WTC11 (cell line): ENCODE measurements at regions of chr12 and their contacts with region 1.

Region 1: DNA sequence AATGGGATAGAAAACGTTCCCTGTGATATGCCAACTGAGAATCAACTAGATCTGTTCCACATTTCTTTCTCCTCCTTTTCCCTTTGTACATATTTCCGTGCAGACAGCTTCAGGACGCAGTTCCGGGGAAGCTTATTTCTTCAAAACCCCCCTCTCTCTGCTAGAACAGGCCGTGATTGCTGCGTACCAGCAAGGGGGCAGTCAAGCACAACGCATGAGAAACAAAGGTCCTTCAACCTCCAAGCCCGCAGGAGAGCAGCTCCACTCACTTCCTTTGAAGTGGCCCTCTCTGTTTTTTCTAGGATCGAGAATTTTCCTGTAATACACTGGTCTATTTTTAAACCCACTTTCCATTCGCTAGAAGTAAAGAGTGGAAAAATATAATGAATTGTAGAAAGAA is 80.8 kb downstream of the ZNF664 start:
- DNase-seq: peak; percentile 70
- ATAC-seq: peak; percentile 96
- H3K4me3 Mint-ChIP-seq: no peak overlapping the region
- H3K27ac Mint-ChIP-seq: no peak overlapping the region
- H3K4me1 Mint-ChIP-seq: peaks cover 24% of the 10 kb centered on the region
- H3K27me3 Mint-ChIP-seq: peaks cover 3% of the 10 kb centered on the region; the same call in 1 of the 2 replicates
- CTCF ChIP-seq: no peak

Region 2: GRCh38 chr12:123972457-123973401 is 81.1 kb before region 1 on chr12 and contains the starts of genes CCDC92 and ZNF664:
- CTCF ChIA-PET with region 1: no interaction called
- POLR2A ChIA-PET with region 1: no interaction called
- DNase-seq: peak; percentile 96
- ATAC-seq: peak; percentile 84
- H3K4me3 Mint-ChIP-seq: peak within 1 kb of the TSS; percentile 91
- H3K27ac Mint-ChIP-seq: peak within 1 kb of the TSS; percentile 44; the same call in 1 of the 2 replicates
- H3K4me1 Mint-ChIP-seq: peaks cover 23% of the 10 kb centered on the region
- H3K27me3 Mint-ChIP-seq: peaks cover 73% of the 10 kb centered on the region
- CTCF ChIP-seq: no peak
- total RNA-seq, gene CCDC92: 1.8 to 2.7 TPM (median 2.0 TPM) in 3 replicates
- total RNA-seq, gene ZNF664: 52.6 to 61.7 TPM (median 58.9 TPM) in 3 replicates

Region 3: GRCh38 chr12:124036674-124037109 is 17.2 kb before region 1 on chr12:
- CTCF ChIA-PET with region 1: interaction called, 30 read pairs
- POLR2A ChIA-PET with region 1: no interaction called
- DNase-seq: no peak
- ATAC-seq: peak; percentile 64
- H3K4me3 Mint-ChIP-seq: no peak overlapping the region
- H3K27ac Mint-ChIP-seq: no peak overlapping the region
- H3K4me1 Mint-ChIP-seq: peaks cover 19% of the 10 kb centered on the region
- H3K27me3 Mint-ChIP-seq: no peaks in the 10 kb centered on the region
- CTCF ChIP-seq: peak; percentile 94

Region 4: DNA sequence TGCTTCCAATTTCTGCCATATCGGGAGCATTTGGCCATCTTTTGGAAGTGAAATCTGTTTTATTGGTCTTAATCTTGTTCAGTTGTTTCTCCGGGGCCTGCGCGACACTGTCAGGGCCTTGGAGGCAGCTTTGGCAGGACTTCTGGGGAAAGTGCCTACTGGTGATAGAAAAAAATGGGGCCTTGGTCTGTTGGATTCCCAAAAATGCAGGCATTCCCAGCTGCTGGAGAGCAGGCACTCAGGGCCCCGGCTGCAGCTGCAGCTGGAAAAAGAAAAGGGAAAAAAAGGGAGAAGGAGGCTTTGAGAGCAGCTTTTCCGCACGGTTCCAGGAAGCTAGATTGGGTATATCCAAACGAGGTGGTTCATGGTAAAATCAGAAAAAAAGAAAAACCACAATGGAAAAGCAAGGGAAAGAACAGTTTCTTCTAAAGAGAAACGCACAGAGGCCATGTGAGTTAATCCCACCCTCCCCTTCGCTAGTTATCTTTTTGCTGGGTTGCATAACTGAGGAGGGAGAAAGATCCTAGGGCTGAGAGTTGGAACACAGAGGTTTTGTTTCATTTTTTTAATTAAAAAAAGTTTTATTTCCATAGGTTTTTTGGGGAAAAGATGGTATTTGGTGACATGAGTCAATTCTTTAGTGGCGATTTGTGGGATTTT is 106.4 kb after region 1 on chr12:
- CTCF ChIA-PET with region 1: interaction called, 20 read pairs
- POLR2A ChIA-PET with region 1: no interaction called
- DNase-seq: no peak
- ATAC-seq: peak; percentile 60
- H3K4me3 Mint-ChIP-seq: no peak overlapping the region
- H3K27ac Mint-ChIP-seq: peak overlapping the region; percentile 71; the same call in 1 of the 2 replicates
- H3K4me1 Mint-ChIP-seq: peaks cover 44% of the 10 kb centered on the region
- H3K27me3 Mint-ChIP-seq: peaks cover 8% of the 10 kb centered on the region
- CTCF ChIP-seq: no peak

Region 5: DNA sequence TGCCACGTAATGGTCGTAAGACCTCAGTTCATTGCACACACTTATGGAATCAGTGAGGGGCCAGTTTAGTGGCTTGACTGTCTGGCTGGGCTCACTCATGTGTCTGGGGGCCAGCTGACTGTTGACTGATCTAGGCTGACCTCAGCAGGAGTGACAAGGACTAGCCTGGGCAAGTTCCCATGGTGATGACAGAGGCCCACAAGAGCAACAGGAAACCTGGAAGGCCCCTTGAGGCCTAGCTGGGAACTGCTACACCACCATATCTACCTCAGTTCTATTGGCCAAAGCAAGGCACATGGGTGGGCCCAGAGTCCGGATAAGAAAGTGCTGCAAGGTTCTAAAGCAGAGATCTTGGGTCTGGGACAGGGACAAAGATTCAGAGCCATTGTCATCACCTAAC is 219.8 kb after region 1 on chr12:
- CTCF ChIA-PET with region 1: interaction called, 11 read pairs
- POLR2A ChIA-PET with region 1: no interaction called
- DNase-seq: peak; percentile 66
- ATAC-seq: peak; percentile 97
- H3K4me3 Mint-ChIP-seq: no peak overlapping the region
- H3K27ac Mint-ChIP-seq: peak overlapping the region; percentile 59; the same call in 1 of the 2 replicates
- H3K4me1 Mint-ChIP-seq: peaks cover 25% of the 10 kb centered on the region
- H3K27me3 Mint-ChIP-seq: no peaks in the 10 kb centered on the region; the same call in 1 of the 2 replicates
- CTCF ChIP-seq: peak; percentile 46; the same call in 1 of the 2 replicates

Region 6: DNA sequence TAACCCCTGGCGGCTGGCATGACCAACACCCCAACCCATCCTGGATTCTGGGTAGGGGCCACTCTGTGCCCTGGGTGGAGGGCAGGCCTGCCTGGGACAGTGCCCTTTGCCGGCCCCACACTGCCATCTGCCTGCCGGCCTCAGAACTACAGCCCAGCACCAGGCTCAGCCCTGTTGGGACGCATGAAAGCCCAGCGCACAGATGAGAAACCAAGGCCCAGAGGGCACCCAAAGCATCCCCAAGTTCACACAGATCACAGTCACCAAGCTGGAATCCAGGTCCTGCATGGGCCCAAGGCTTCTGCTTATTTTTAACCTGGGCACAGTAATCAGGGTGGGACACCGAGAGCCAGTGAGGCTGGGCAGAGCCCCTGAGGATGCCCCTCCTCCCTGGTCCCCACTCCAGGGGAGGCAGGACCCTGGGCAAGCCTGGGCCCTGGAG is 267.2 kb after region 1 on chr12:
- CTCF ChIA-PET with region 1: interaction called, 40 read pairs
- POLR2A ChIA-PET with region 1: interaction called, 5 read pairs
- DNase-seq: peak; percentile 87
- ATAC-seq: peak; percentile 83
- H3K4me3 Mint-ChIP-seq: no peak overlapping the region
- H3K27ac Mint-ChIP-seq: no peak overlapping the region
- H3K4me1 Mint-ChIP-seq: peaks cover 37% of the 10 kb centered on the region
- H3K27me3 Mint-ChIP-seq: peaks cover 6% of the 10 kb centered on the region
- CTCF ChIP-seq: peak; percentile 93